ENCODE measurements at regions of chr17 and their contacts with region 1.

Region 1: GRCh38 chr17:17694169-17695081 is 13.2 kb downstream of the RAI1 start:
- DNase-seq: peak; percentile 74 to 88 (median 85)
- H3K4me3 ChIP-seq: peak overlapping the region; percentile 53
- H3K27ac ChIP-seq: peak overlapping the region; percentile 79 to 95
- H3K4me1 ChIP-seq: peaks cover 29% of the 10 kb centered on the region
- H3K27me3 ChIP-seq: no peaks in the 10 kb centered on the region
- CTCF ChIP-seq: no peak
- EP300 ChIP-seq: peak; percentile 72
- POLR2A ChIP-seq: peak; percentile 77

Region 2: GRCh38 chr17:17641621-17642409 is 52.6 kb before region 1 on chr17:
- intact Hi-C with region 1: no loop called
- DNase-seq: peak; percentile 72 to 87 (median 84)
- H3K4me3 ChIP-seq: no peak overlapping the region
- H3K27ac ChIP-seq: no peak overlapping the region
- H3K4me1 ChIP-seq: no peaks in the 10 kb centered on the region
- H3K27me3 ChIP-seq: no peaks in the 10 kb centered on the region
- CTCF ChIP-seq: peak; percentile 86 to 92 (median 89)
- EP300 ChIP-seq: no peak
- POLR2A ChIP-seq: no peak

Region 3: GRCh38 chr17:17681187-17681848 is 13.1 kb before region 1 on chr17 and contains the start of gene RAI1:
- intact Hi-C with region 1: no loop called
- DNase-seq: peak; percentile 80 to 90 (median 85)
- H3K4me3 ChIP-seq: peak within 1 kb of the TSS; percentile 68
- H3K27ac ChIP-seq: peak within 1 kb of the TSS; percentile 89 to 96
- H3K4me1 ChIP-seq: peaks cover 19% of the 10 kb centered on the region
- H3K27me3 ChIP-seq: no peaks in the 10 kb centered on the region
- CTCF ChIP-seq: peak; percentile 17 to 98 (median 94)
- EP300 ChIP-seq: no peak
- POLR2A ChIP-seq: peak; percentile 53
- total RNA-seq, gene RAI1: 16.3 to 57.7 (median 37.5) TPM

Region 4: DNA sequence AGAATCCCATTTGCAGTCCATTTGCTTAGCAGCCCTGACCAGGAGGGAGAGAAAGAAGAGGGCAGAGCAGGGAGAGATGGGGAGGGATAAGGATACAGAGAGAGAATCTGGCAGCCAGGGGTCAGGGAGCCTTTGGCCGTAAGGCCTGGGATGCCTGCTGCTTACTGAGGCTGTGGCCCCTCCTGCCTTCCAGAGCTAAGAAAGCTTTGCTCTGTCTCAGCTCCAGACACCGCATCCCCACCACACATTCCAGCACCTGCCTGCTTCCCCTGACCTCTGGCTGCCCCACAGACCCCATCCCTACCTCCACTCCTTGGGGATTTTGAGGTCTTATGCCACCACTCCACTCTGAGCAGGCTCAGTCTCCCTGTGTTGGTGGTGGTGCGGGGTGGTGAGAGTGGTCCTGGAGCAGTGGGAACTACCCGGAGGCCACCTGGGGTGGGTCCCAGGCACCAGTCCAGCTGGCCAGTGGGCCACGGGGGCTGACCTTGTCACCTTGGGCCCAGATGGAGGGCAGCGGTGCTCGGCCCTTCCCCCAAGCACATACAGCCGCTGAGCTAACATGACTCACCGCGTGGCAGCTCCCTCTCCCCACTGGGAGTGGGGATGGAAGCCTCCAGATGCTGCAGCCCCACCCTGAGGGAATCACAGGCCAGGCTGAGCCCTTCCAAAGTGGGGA is 45.1 kb after region 1 on chr17:
- intact Hi-C with region 1: loop called in 1 of 4 experiments (anchors 5 kb)
- DNase-seq: peak; percentile 62 to 76 (median 72)
- H3K4me3 ChIP-seq: no peak overlapping the region
- H3K27ac ChIP-seq: peak overlapping the region; percentile 31 to 40
- H3K4me1 ChIP-seq: peaks cover 40% of the 10 kb centered on the region
- H3K27me3 ChIP-seq: no peaks in the 10 kb centered on the region
- CTCF ChIP-seq: no peak
- EP300 ChIP-seq: no peak
- POLR2A ChIP-seq: no peak

Measured in ovary (tissue), 10 donors.